ENCODE measurements at regions of chr2 and their contacts with region 1.

Region 1: DNA sequence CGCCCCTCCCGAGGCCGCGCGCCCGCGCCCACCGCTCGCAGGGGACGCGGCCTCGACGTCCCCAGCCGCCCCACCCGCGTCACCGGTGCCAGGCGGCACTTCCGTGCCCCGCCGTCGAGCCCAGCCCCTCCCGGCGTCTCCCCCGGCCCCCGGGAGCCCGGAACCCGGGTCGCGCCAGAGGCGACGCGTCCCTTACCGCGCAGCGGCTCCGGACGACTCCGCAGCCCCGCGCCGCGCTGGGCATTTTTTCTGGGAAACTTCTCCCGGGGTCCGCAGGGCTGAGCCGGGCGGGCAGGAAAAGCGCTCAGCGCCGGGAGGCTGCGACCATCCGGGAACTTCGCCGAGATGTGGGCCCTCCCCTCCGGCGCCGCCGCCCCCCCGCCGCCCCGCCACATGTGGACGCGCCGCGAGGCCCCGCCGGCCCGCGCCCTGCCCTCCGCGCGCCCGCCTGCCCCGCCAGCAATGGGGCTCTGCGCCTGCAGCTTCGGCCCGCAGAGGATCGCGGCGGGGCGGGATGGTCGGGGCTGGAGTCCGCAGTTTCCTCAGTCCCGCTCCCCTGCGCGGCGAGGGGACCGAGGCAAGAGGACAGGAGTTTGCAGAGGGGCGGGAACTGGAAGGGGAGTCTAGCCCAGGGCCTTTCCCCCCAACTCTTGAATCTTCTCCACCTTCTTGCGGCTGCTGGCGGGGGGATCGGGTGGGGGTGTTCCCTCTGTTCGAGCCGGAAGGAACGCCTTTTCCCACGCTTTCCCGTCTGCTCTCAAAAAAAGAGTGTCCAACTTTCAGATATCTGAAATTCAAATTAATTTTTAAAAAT is 81.5 kb downstream of the CHRNA1 start:
- DNase-seq: peak; percentile 67 to 78
- H3K4me3 ChIP-seq: peak overlapping the region; percentile 77 to 87
- H3K27ac ChIP-seq: peak overlapping the region; percentile 89 to 92
- H3K4me1 ChIP-seq: peaks cover 3% of the 10 kb centered on the region in 2 donors
- H3K27me3 ChIP-seq: no peaks in the 10 kb centered on the region
- CTCF ChIP-seq: no peak
- POLR2A ChIP-seq: peak in 1 of 2 donors; percentile 26

Region 2: GRCh38 chr2:174465327-174465726 is 217.5 kb before region 1 on chr2:
- intact Hi-C with region 1: loop called (anchors 10 kb)
- DNase-seq: no peak
- H3K4me3 ChIP-seq: no peak overlapping the region
- H3K27ac ChIP-seq: no peak overlapping the region
- H3K4me1 ChIP-seq: no peaks in the 10 kb centered on the region
- H3K27me3 ChIP-seq: no peaks in the 10 kb centered on the region
- CTCF ChIP-seq: no peak
- POLR2A ChIP-seq: no peak

Region 3: GRCh38 chr2:174585146-174585954 is 97.4 kb before region 1 on chr2:
- intact Hi-C with region 1: loop called (anchors 10 kb)
- DNase-seq: no peak
- H3K4me3 ChIP-seq: no peak overlapping the region
- H3K27ac ChIP-seq: no peak overlapping the region
- H3K4me1 ChIP-seq: peaks cover 0 to 9% of the 10 kb centered on the region in 2 donors
- H3K27me3 ChIP-seq: no peaks in the 10 kb centered on the region
- CTCF ChIP-seq: no peak
- POLR2A ChIP-seq: no peak

Measured in uterus (tissue), 4 donors.